HepG2 (cell line): ENCODE measurements at regions of chr3 and their contacts with region 1.

Region 1: GRCh38 chr3:141412087-141412935 is 44.0 kb downstream of the ZBTB38 start:
- DNase-seq: peak; percentile 49
- ATAC-seq: 0 out of 3 replicates have a peak, but pooled peaks have one; percentile 19
- H3K4me3 ChIP-seq: peak overlapping the region in 2 of 3 experiments; percentile 34 to 54; a peak in 3 of 6 replicates
- H3K27ac ChIP-seq: peak overlapping the region; percentile 91
- H3K4me1 ChIP-seq: peaks cover 67% of the 10 kb centered on the region
- H3K27me3 ChIP-seq: no peaks in the 10 kb centered on the region
- CTCF ChIP-seq: no peak
- EP300 ChIP-seq: no peak
- POLR2A ChIP-seq: no peak; a peak in 2 of 4 replicates
- RAD21 ChIP-seq: no peak

Region 2: GRCh38 chr3:141303481-141304223 is 108.7 kb before region 1 on chr3:
- CTCF ChIA-PET with region 1: no interaction called
- POLR2A ChIA-PET with region 1: no interaction called
- in situ Hi-C with region 1: no loop called
- intact Hi-C with region 1: loop called (anchors 1 kb)
- DNase-seq: peak; percentile 64
- ATAC-seq: peak; percentile 80
- H3K4me3 ChIP-seq: no peak overlapping the region
- H3K27ac ChIP-seq: no peak overlapping the region
- H3K4me1 ChIP-seq: peaks cover 6% of the 10 kb centered on the region
- H3K27me3 ChIP-seq: no peaks in the 10 kb centered on the region
- CTCF ChIP-seq: peak; percentile 74
- EP300 ChIP-seq: no peak
- POLR2A ChIP-seq: no peak
- RAD21 ChIP-seq: 0 out of 2 replicates have a peak, but pooled peaks have one; percentile 28

Region 3: GRCh38 chr3:141360888-141361598 is 51.3 kb before region 1 on chr3:
- CTCF ChIA-PET with region 1: interaction called, 5 read pairs
- POLR2A ChIA-PET with region 1: interaction called, 5 read pairs
- in situ Hi-C with region 1: no loop called
- intact Hi-C with region 1: loop called (anchors 2 kb)
- DNase-seq: peak; percentile 98
- ATAC-seq: peak; percentile 97
- H3K4me3 ChIP-seq: peak overlapping the region in 1 of 3 experiments; percentile 24; a peak in 1 of 6 replicates
- H3K27ac ChIP-seq: no peak overlapping the region
- H3K4me1 ChIP-seq: peaks cover 24% of the 10 kb centered on the region
- H3K27me3 ChIP-seq: no peaks in the 10 kb centered on the region
- CTCF ChIP-seq: peak; percentile 89
- EP300 ChIP-seq: peak in 1 of 2 experiments; percentile 95; a peak in 2 of 4 replicates
- POLR2A ChIP-seq: no peak
- RAD21 ChIP-seq: peak; percentile 91

Region 4: DNA sequence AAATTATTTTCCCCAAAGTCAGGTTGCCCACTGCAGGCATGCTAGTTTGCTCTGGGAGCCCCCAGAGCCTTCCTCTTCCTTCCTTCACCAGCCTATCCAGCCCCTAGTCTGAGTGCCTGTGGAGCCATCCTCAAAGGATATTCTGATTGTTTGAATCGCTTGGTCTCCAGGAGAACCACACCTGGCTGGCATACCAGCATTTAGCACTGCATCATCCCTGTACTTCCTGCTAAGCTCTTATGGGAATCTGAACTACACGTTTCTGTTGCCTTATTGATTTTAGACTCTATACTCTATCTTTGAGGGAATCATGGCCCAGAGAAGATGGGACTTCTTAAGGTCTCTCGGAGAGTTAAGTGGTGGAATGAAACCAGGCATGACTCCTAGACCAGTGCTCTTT is 17.8 kb before region 1 on chr3:
- CTCF ChIA-PET with region 1: no interaction called
- POLR2A ChIA-PET with region 1: no interaction called
- in situ Hi-C with region 1: no loop called
- intact Hi-C with region 1: no loop called
- DNase-seq: no peak
- ATAC-seq: no peak
- H3K4me3 ChIP-seq: no peak overlapping the region
- H3K27ac ChIP-seq: no peak overlapping the region
- H3K4me1 ChIP-seq: peaks cover 37% of the 10 kb centered on the region
- H3K27me3 ChIP-seq: no peaks in the 10 kb centered on the region
- CTCF ChIP-seq: no peak
- EP300 ChIP-seq: no peak
- POLR2A ChIP-seq: no peak
- RAD21 ChIP-seq: no peak

Region 5: GRCh38 chr3:141426404-141427034 is 14.2 kb after region 1 on chr3:
- CTCF ChIA-PET with region 1: no interaction called
- POLR2A ChIA-PET with region 1: interaction called, 128 read pairs
- in situ Hi-C with region 1: no loop called
- intact Hi-C with region 1: no loop called
- DNase-seq: no peak
- ATAC-seq: no peak
- H3K4me3 ChIP-seq: no peak overlapping the region
- H3K27ac ChIP-seq: no peak overlapping the region
- H3K4me1 ChIP-seq: peaks cover 50% of the 10 kb centered on the region
- H3K27me3 ChIP-seq: no peaks in the 10 kb centered on the region
- CTCF ChIP-seq: no peak
- EP300 ChIP-seq: no peak
- POLR2A ChIP-seq: no peak
- RAD21 ChIP-seq: no peak

Region 6: GRCh38 chr3:141441381-141442364 is 29.4 kb after region 1 on chr3:
- CTCF ChIA-PET with region 1: no interaction called
- POLR2A ChIA-PET with region 1: interaction called, 6 read pairs
- in situ Hi-C with region 1: no loop called
- intact Hi-C with region 1: loop called (anchors 2 kb)
- DNase-seq: peak; percentile 57
- ATAC-seq: peak; percentile 98
- H3K4me3 ChIP-seq: no peak overlapping the region
- H3K27ac ChIP-seq: peak overlapping the region; percentile 66
- H3K4me1 ChIP-seq: peaks cover 32% of the 10 kb centered on the region
- H3K27me3 ChIP-seq: no peaks in the 10 kb centered on the region
- CTCF ChIP-seq: peak; percentile 81
- EP300 ChIP-seq: no peak
- POLR2A ChIP-seq: no peak
- RAD21 ChIP-seq: peak; percentile 58